H1 (cell line): ENCODE measurements at regions of chr11 and their contacts with region 1.

Region 1: GRCh38 chr11:61541598-61541997 is 33.0 kb downstream of the LRRC10B start:
- DNase-seq: no peak
- H3K4me3 ChIP-seq: no peak overlapping the region
- H3K27ac ChIP-seq: no peak overlapping the region
- H3K4me1 ChIP-seq: peaks cover 5 to 35% (median 18%) of the 10 kb centered on the region in 4 experiments
- H3K27me3 ChIP-seq: no peaks in the 10 kb centered on the region; a peak in 1 of 7 replicates
- CTCF ChIP-seq: no peak
- EP300 ChIP-seq: no peak
- POLR2A ChIP-seq: no peak
- RAD21 ChIP-seq: no peak

Region 2: DNA sequence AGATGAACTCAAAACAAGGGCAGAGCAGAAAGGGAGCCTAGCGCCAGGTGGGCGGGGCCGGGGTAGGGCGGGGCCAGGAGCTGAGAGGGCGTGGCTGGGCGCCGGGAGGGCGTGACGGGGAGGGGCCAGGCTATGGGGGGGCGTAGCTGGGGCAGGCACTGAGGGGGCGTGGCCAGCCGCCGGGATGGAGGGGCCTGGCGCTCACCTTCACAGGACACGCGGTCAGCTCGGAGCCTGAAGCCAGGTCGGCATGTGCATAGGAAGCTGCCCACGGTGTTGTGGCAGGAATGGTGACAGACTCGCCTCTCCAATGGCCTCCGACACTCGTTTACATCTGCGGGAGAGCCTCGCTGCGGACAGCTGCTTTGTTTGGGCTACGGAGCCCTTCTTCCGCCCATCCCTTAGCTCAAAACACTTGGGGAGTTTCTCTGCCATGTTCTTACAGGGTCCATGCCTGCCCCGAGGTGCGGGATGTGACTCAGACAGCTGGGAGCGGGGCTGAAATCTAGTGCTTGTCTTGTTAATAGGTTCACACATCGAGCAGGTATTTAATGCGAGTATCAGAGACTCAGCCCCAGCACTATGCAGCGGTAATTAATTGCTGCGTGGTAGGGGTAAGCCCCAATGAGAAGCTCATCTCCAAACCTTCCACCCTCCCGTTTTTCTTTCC is 259.9 kb before region 1 on chr11:
- CTCF ChIA-PET with region 1: no interaction called
- POLR2A ChIA-PET with region 1: no interaction called
- DNase-seq: peak; percentile 62 to 96
- H3K4me3 ChIP-seq: peak overlapping the region in 3 of 4 experiments; percentile 17 to 28 (median 23); a peak in 2 of 8 replicates
- H3K27ac ChIP-seq: no peak overlapping the region
- H3K4me1 ChIP-seq: peaks cover 0 to 8% (median 5%) of the 10 kb centered on the region in 4 experiments; a peak in 4 of 7 replicates
- H3K27me3 ChIP-seq: peaks cover 0 to 5% (median under 1%) of the 10 kb centered on the region in 4 experiments; a peak in 4 of 7 replicates
- CTCF ChIP-seq: no peak
- EP300 ChIP-seq: no peak
- POLR2A ChIP-seq: peak in 1 of 2 experiments; percentile 77; a peak in 2 of 3 replicates
- RAD21 ChIP-seq: no peak

Region 3: GRCh38 chr11:61526956-61527731 is 14.5 kb before region 1 on chr11:
- CTCF ChIA-PET with region 1: interaction called, 224 read pairs
- POLR2A ChIA-PET with region 1: interaction called, 4 read pairs
- DNase-seq: no peak
- H3K4me3 ChIP-seq: no peak overlapping the region
- H3K27ac ChIP-seq: no peak overlapping the region
- H3K4me1 ChIP-seq: peaks cover 0 to 11% (median 4%) of the 10 kb centered on the region in 4 experiments; a peak in 5 of 7 replicates
- H3K27me3 ChIP-seq: no peaks in the 10 kb centered on the region; a peak in 1 of 7 replicates
- CTCF ChIP-seq: no peak
- EP300 ChIP-seq: no peak
- POLR2A ChIP-seq: no peak
- RAD21 ChIP-seq: no peak

Region 4: GRCh38 chr11:61555051-61555969 is 13.7 kb after region 1 on chr11:
- CTCF ChIA-PET with region 1: interaction called, 330 read pairs
- POLR2A ChIA-PET with region 1: interaction called, 4 read pairs
- DNase-seq: peak in 1 of 2 experiments; percentile 72
- H3K4me3 ChIP-seq: peak overlapping the region; percentile 11 to 62 (median 34); a peak in 7 of 8 replicates
- H3K27ac ChIP-seq: no peak overlapping the region
- H3K4me1 ChIP-seq: peaks cover 0 to 27% (median 14%) of the 10 kb centered on the region in 4 experiments; a peak in 4 of 7 replicates
- H3K27me3 ChIP-seq: peaks cover 0 to 21% (median 20%) of the 10 kb centered on the region in 4 experiments; a peak in 6 of 7 replicates
- CTCF ChIP-seq: peak; percentile 32 to 45 (median 38); a peak in 3 of 4 replicates
- EP300 ChIP-seq: no peak
- POLR2A ChIP-seq: no peak
- RAD21 ChIP-seq: peak in 1 of 2 experiments; percentile 16; a peak in 1 of 4 replicates